CD14-positive monocyte (primary cell): ENCODE measurements at regions of chr9 and their contacts with region 1.

Region 1: DNA sequence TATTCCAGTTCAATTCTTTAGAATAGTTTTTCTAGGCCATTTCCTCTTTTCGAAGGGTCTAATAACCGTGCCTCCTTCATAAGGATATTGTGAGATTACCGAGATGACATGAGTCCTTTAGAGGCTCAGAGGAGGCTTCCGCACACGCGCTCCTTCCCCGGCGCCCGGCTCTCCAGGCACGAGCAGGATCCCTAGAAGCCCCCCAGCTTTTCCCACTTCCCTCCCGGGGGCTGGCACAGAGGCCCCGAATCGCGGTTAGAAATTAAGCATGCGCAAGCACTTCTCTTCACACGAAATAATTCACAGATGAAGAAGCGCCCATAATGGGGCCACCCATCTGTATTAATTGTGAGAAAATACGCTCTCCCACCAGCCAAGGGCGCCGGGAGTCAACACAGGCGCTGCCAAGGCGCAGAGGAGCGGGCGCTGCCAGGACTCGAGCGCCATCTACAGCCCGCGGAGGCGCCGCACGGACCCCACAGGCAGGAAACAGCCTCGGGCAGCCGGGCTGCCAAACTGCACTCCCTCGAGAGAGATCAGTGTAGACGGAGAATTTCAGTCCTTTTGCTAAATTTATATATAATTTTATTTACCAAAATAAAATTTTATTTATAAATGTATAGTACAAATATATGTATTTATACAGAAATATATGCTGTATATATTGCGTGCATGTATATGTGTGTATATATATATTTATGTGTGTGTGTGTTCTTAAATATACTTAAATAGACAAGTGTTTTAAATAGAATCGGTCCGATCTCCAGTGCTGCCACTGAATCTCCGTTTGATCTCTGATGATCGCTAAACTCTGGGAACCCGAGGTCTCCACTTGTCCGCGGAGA is 258.1 kb upstream of the NFIL3 start:
- DNase-seq: peak; percentile 35 to 51 (median 48)
- H3K4me3 ChIP-seq: no peak overlapping the region
- H3K4me3 Mint-ChIP-seq: peak overlapping the region; percentile 73 to 82
- H3K27ac ChIP-seq: no peak overlapping the region
- H3K27ac Mint-ChIP-seq: peak overlapping the region in 3 of 7 donors; percentile 25 to 68 (median 68)
- H3K4me1 ChIP-seq: peaks cover 11% of the 10 kb centered on the region in 2 donors
- H3K4me1 Mint-ChIP-seq: peaks cover 14% of the 10 kb centered on the region
- H3K27me3 ChIP-seq: no peaks in the 10 kb centered on the region
- H3K27me3 Mint-ChIP-seq: peaks cover 0 to 4% (median 3%) of the 10 kb centered on the region in 3 donors
- CTCF ChIP-seq: peak; percentile 95

Region 2: GRCh38 chr9:90914868-90915483 is 766.7 kb before region 1 on chr9:
- intact Hi-C with region 1: loop called (anchors 5 to 10 kb)
- DNase-seq: peak; percentile 56 to 75 (median 74)
- H3K4me3 ChIP-seq: no peak overlapping the region
- H3K4me3 Mint-ChIP-seq: no peak overlapping the region
- H3K27ac ChIP-seq: no peak overlapping the region
- H3K27ac Mint-ChIP-seq: peak overlapping the region in 1 of 7 donors; percentile 50
- H3K4me1 ChIP-seq: peaks cover 0 to 6% of the 10 kb centered on the region in 2 donors
- H3K4me1 Mint-ChIP-seq: peaks cover 6% of the 10 kb centered on the region
- H3K27me3 ChIP-seq: no peaks in the 10 kb centered on the region
- H3K27me3 Mint-ChIP-seq: no peaks in the 10 kb centered on the region
- CTCF ChIP-seq: peak; percentile 90

Region 3: DNA sequence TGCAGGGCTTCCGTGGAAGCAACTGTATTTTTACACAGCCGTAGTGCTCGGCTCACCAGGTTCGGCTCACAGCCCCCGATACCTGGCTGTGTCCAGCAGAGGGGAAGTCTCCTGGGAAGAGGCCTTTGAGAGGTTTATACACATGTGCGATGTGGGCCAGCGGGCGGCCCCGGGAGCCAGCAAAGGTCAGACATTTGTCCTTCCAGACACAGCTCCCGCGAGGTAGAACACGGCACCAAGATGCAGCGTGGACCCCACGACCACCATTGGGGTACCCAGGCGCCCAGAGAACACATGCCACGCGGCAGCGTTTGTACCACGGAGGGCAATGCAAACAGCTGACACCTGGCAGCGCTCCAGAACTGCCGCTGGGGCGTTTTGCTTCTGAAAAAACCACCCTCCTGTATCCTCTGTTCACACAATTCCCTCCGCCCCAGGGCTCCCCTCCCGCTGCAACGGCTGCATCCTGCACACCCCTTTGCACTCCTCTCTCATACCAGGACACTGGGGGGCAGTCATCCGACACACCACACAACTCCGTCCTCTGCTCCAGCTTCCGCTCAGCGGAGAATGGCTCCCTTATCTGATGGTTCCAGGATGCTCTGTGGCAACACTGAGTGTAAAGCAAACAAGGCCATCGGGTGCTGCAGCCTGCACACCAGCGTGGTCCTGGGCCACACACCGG is 644.7 kb before region 1 on chr9:
- intact Hi-C with region 1: loop called in 1 of 2 experiments (anchors 10 kb)
- DNase-seq: peak; percentile 67 to 81 (median 68)
- H3K4me3 ChIP-seq: no peak overlapping the region
- H3K4me3 Mint-ChIP-seq: peak overlapping the region; percentile 39 to 78
- H3K27ac ChIP-seq: no peak overlapping the region
- H3K27ac Mint-ChIP-seq: peak overlapping the region in 2 of 7 donors; percentile 20 to 61
- H3K4me1 ChIP-seq: peaks cover 10 to 11% of the 10 kb centered on the region in 2 donors
- H3K4me1 Mint-ChIP-seq: peaks cover 17% of the 10 kb centered on the region
- H3K27me3 ChIP-seq: peaks cover 0 to 3% of the 10 kb centered on the region in 2 donors
- H3K27me3 Mint-ChIP-seq: peaks cover 5 to 14% (median 13%) of the 10 kb centered on the region in 3 donors
- CTCF ChIP-seq: peak; percentile 64